Tibial artery (tissue), 4 donors: ENCODE measurements at regions of chr14 and their contacts with region 1.

Region 1: GRCh38 chr14:61269321-61270083 is 11.6 kb downstream of the TMEM30B start:
- DNase-seq: peak; percentile 81 to 85
- H3K4me3 ChIP-seq: peak overlapping the region; percentile 27 to 48
- H3K27ac ChIP-seq: no peak overlapping the region
- H3K4me1 ChIP-seq: peaks cover 0 to 26% (median 1%) of the 10 kb centered on the region in 4 donors
- H3K27me3 ChIP-seq: peaks cover 0 to 4% of the 10 kb centered on the region in 2 donors
- CTCF ChIP-seq: peak; percentile 75 to 86

Region 2: GRCh38 chr14:61287196-61287595 is 17.7 kb after region 1 on chr14:
- intact Hi-C with region 1: loop called (anchors 2 kb)
- DNase-seq: no peak
- H3K4me3 ChIP-seq: no peak overlapping the region
- H3K27ac ChIP-seq: no peak overlapping the region
- H3K4me1 ChIP-seq: peaks cover 0 to 13% (median 0%) of the 10 kb centered on the region in 4 donors
- H3K27me3 ChIP-seq: no peaks in the 10 kb centered on the region
- CTCF ChIP-seq: no peak

Region 3: GRCh38 chr14:61308198-61308597 is 38.7 kb after region 1 on chr14:
- intact Hi-C with region 1: no loop called
- DNase-seq: no peak
- H3K4me3 ChIP-seq: no peak overlapping the region
- H3K27ac ChIP-seq: no peak overlapping the region
- H3K4me1 ChIP-seq: no peaks in the 10 kb centered on the region
- H3K27me3 ChIP-seq: no peaks in the 10 kb centered on the region
- CTCF ChIP-seq: no peak

Region 4: GRCh38 chr14:61644834-61645233 is 375.3 kb after region 1 on chr14:
- intact Hi-C with region 1: no loop called
- DNase-seq: no peak
- H3K4me3 ChIP-seq: no peak overlapping the region
- H3K27ac ChIP-seq: no peak overlapping the region
- H3K4me1 ChIP-seq: peaks cover 0 to 10% (median 2%) of the 10 kb centered on the region in 4 donors
- H3K27me3 ChIP-seq: no peaks in the 10 kb centered on the region
- CTCF ChIP-seq: no peak